ENCODE measurements at regions of chr22 and their contacts with region 1.

Region 1: GRCh38 chr22:46762238-46763050 is at the start of gene TBC1D22A:
- DNase-seq: no peak
- H3K4me3 ChIP-seq: peak within 1 kb of the TSS; percentile 93
- CTCF ChIP-seq: no peak

Region 2: DNA sequence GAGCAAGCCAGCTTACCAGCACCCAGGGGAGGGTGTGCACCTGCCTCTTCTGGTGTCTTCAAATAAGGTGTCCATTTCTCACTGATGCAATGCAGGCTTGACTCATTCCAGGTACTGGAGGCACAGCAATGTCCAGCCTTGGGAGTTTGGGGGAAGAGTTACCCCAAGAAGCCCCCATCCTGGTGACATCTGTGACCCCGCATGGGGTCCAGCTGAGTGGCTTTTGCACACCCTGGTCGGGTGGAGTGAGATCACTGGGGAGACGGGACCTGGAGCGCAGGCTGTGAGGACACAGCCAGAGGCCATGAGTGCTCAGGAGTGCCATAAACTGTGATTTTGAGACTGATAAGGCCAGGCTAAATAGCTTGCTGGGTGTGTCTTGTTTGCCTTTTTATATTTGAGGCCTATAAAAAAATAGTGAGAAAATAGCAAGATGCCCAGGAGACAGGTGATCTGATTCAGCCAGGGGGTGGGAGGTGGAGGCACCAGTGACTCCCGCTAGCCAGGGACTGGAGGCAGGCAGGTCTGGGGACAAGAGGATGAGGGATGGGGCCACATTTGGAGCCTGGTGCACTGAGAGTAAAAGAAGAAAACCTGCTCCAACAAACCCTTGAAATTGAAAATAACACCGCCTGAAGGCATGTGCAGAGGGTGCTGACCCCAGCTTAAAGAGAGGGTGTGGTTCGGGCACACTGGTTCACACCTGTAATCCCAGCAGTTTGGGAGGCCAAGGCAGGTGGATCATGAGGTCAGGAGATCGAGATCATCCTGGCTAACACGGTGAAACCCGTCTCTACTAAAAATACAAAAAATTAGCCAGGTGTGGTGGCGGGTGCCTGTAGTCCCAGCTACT is 19.5 kb before region 1 on chr22:
- CTCF ChIA-PET with region 1: interaction called, 13 read pairs
- POLR2A ChIA-PET with region 1: interaction called, 8 read pairs
- DNase-seq: no peak
- H3K4me3 ChIP-seq: no peak overlapping the region
- CTCF ChIP-seq: no peak

Region 3: DNA sequence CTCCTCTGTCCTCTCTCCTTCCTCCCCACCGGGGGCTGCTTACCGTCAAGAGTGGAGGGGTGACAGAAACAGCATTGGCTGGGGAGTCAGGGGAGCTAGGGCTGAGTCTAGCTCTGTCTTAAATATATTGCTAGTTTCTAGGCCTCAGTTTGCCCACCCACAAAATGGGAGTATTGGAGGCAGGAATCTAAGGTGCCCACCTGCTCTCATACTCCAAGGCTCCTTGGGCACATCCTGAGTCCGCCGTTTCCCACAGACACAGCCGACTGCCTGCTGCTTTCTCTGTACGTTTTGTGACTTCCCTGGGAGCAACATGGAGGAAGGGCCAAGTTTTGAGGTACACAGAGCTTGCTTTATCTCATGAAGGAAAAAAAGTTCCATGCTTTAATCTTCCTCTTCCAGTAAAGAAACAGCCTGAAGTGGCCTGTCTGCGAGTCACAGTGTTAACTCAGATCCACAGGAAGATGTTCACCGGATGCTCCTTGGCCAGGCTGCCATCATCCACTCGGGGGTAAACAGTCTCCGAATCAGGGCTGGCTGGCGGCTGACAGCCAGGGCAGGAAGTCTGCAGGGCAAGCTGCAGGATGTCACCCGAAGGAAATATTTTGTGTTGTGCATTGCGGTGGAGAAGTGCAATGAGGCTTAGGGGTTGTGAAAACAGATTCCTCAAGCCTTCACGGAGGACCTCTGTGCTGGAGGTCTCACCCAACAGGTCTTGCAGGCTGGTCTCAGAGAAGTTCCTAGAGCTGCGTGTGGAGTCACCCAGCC is 13.4 kb before region 1 on chr22:
- CTCF ChIA-PET with region 1: interaction called, 22 read pairs
- POLR2A ChIA-PET with region 1: interaction called, 20 read pairs
- DNase-seq: no peak
- H3K4me3 ChIP-seq: no peak overlapping the region
- CTCF ChIP-seq: no peak

Region 4: DNA sequence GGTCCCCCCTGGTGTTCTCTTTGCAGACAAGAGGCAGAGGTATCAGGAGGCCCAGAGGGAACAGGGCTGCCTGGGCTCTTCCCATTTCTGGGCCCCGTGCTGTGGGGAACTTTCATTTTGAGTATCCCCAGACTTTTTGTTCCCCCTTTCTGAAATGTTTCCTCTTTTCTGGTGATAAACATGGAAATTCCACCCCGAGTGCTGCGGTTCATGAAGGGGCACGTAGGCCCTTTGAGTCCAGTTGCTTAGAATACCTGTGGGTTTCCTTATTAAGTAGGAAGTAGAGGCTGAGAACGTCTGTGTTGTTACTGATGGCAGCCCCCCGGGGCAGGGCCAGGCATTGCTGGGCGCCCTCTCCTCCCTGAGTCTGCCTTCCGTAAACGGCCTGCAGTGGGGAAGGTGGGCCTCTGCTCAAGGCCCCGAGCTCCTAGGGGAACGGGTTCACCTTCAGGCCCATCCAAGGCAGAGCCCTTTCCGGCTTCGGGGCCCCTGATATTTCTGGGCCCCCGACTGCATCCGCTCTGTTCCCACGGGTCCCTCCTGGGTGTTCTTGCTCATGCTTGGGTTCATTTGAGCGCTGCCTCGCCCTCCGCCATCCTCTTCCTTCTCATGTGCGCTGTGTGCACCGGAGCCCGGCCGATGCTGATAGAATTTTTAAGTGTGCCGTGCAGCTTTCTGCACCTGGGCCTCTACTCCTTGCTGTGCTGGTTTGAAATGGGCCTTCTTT is 12.0 kb after region 1 on chr22:
- CTCF ChIA-PET with region 1: interaction called, 12 read pairs
- POLR2A ChIA-PET with region 1: interaction called, 11 read pairs
- DNase-seq: no peak
- H3K4me3 ChIP-seq: no peak overlapping the region
- CTCF ChIP-seq: no peak